Ascending aorta (tissue), 2 donors: ENCODE measurements at regions of chr21 and their contacts with region 1.

Region 1: GRCh38 chr21:39137248-39138178 is 45.7 kb downstream of the PSMG1 start:
- DNase-seq: no peak
- H3K4me3 ChIP-seq: no peak overlapping the region
- H3K27ac ChIP-seq: peak overlapping the region in 1 of 2 donors; percentile 12
- H3K4me1 ChIP-seq: no peaks in the 10 kb centered on the region
- H3K27me3 ChIP-seq: no peaks in the 10 kb centered on the region
- CTCF ChIP-seq: no peak

Region 2: GRCh38 chr21:38380481-38381137 is 756.9 kb before region 1 on chr21:
- intact Hi-C with region 1: loop called (anchors 10 kb)
- DNase-seq: peak in 1 of 2 donors; percentile 78
- H3K4me3 ChIP-seq: peak overlapping the region in 1 of 2 donors; percentile 17
- H3K27ac ChIP-seq: peak overlapping the region; percentile 75 to 89
- H3K4me1 ChIP-seq: peaks cover 17 to 41% of the 10 kb centered on the region in 2 donors
- H3K27me3 ChIP-seq: no peaks in the 10 kb centered on the region
- CTCF ChIP-seq: peak; percentile 7 to 33 (median 28)

Region 3: DNA sequence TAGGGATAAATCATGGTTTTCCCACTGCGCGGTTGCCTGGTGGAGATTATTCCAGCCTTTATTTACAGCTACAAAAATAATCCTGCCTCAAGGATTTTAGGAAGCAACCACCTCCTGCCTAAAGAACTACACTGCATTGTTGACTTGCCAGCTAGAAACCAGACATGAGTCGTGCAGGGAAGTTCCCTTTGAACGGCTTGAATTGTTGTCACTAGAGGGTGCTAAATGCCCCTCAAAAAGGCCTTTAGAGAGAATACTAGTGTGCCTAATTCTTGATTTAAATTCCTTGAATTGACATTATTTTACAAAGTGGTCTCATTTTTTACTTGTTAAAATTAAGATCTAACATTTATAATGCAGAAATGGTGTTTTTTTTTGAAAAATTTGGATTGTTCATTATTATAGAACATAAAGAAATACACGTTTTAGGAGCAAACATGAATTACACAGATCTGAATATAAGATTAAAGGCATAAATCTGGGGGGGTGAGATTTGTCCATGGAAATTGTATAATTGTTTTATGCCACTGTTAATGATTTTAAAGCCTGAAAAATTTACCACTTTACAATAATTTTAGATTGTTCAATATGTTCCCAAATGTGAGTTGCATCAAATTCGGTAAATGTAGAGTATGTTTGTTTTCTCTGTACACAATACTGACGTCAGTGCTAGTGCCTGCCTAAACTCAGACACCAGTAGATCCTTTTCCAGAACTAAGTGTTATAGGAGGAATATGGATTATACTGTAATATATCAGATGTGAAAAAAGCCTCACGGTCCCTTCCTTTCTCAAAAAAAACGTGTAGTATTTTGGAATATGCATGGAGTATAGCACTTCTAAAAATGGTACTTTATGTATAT is 631.6 kb before region 1 on chr21:
- intact Hi-C with region 1: loop called (anchors 5 kb)
- DNase-seq: no peak
- H3K4me3 ChIP-seq: peak overlapping the region; percentile 31 to 62
- H3K27ac ChIP-seq: peak overlapping the region; percentile 82 to 86
- H3K4me1 ChIP-seq: peaks cover 0 to 24% of the 10 kb centered on the region in 2 donors
- H3K27me3 ChIP-seq: no peaks in the 10 kb centered on the region
- CTCF ChIP-seq: peak; percentile 54 to 75 (median 73)

Region 4: DNA sequence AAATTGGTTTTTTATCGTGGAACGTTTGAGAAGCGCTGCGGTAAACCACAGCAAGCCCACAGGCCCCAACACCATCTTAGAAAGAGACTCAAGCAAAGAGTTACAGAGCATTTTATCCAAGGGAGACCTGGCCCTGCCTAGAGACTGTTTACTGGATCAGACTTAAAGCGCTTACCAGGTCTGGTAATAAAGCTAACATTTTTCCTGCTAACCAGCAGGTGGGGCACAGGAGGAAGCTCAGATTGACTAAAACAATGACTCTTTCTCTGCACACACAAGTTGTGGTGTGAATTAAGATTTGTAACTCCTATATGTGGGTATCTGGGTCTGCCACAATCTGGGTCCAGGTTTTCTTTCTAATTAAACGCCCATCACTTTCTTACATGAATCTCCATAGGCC is 468.3 kb before region 1 on chr21:
- intact Hi-C with region 1: loop called (anchors 10 kb)
- DNase-seq: no peak
- H3K4me3 ChIP-seq: no peak overlapping the region
- H3K27ac ChIP-seq: no peak overlapping the region
- H3K4me1 ChIP-seq: peaks cover 0 to 12% of the 10 kb centered on the region in 2 donors
- H3K27me3 ChIP-seq: no peaks in the 10 kb centered on the region
- CTCF ChIP-seq: peak; percentile 27 to 54 (median 41)

Region 5: GRCh38 chr21:38733973-38734546 is 403.5 kb before region 1 on chr21:
- intact Hi-C with region 1: loop called (anchors 1 kb)
- DNase-seq: peak; percentile 55 to 96
- H3K4me3 ChIP-seq: peak overlapping the region; percentile 36 to 56
- H3K27ac ChIP-seq: peak overlapping the region; percentile 78 to 81
- H3K4me1 ChIP-seq: peaks cover 0 to 20% of the 10 kb centered on the region in 2 donors
- H3K27me3 ChIP-seq: no peaks in the 10 kb centered on the region
- CTCF ChIP-seq: peak; percentile 84 to 92 (median 92)

Region 6: DNA sequence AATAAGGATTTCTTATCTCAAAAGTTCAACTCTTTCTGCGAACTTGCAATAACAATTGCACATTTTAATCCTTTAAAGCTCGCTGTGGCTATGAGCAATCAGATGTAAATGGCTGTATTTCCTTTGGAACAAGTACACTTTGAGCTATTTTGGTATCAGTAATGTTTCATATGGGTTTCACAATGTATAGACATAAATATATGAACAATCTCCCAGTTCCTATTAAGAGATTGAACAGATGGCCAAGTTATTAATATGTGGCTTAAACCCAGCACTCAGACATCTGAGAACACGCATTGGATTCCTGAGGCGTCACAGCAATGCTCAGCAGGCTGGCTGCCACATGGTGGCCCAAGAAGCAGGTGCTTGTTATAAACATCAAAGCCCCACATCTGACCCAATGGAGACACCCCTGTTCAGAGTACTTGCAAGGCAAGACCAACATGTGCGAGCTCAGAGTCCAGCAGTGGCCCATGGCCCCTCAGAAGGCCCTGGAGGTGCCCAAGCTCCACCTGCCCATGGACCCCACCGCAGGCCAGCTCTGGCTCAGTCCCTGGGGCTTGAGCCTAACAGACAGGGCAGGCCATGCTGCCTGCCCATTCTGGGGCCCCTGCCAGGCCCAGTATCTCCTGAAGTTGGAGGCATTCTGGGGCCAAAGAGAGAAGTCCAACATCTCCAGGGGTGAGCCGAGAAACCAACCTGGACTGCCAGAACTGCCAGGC is 22.0 kb after region 1 on chr21:
- intact Hi-C with region 1: no loop called
- DNase-seq: no peak
- H3K4me3 ChIP-seq: no peak overlapping the region
- H3K27ac ChIP-seq: peak overlapping the region in 1 of 2 donors; percentile 14
- H3K4me1 ChIP-seq: peaks cover 3 to 14% of the 10 kb centered on the region in 2 donors
- H3K27me3 ChIP-seq: no peaks in the 10 kb centered on the region
- CTCF ChIP-seq: no peak